Mucosa of descending colon (tissue), 3 donors: ENCODE measurements at regions of chr20 and their contacts with region 1.

Region 1: GRCh38 chr20:44310664-44311639 is at the start of gene FITM2:
- DNase-seq: peak; percentile 99
- ATAC-seq: peak; percentile 99
- H3K4me3 ChIP-seq: peak within 1 kb of the TSS; percentile 56
- H3K4me1 ChIP-seq: peaks cover 5% of the 10 kb centered on the region
- CTCF ChIP-seq: peak; percentile 93
- total RNA-seq, gene FITM2: 10.9 to 12.6 (median 10.9) TPM

Region 2: GRCh38 chr20:44217342-44218092 is 93.4 kb before region 1 on chr20:
- intact Hi-C with region 1: loop called (anchors 5 kb)
- DNase-seq: peak in 2 of 3 donors; percentile 80 to 92
- ATAC-seq: peak; percentile 88
- H3K4me3 ChIP-seq: no peak overlapping the region
- H3K4me1 ChIP-seq: peaks cover 15% of the 10 kb centered on the region
- CTCF ChIP-seq: peak; percentile 81